SK-N-SH (cell line): ENCODE measurements at regions of chr11 and their contacts with region 1.

Region 1: GRCh38 chr11:90288212-90288821 is 65.5 kb upstream of the CHORDC1 start:
- DNase-seq: peak; percentile 47
- H3K4me3 ChIP-seq: peak overlapping the region in 1 of 2 experiments; percentile 28; a peak in 1 of 4 replicates
- H3K27ac ChIP-seq: no peak overlapping the region
- H3K4me1 ChIP-seq: no peaks in the 10 kb centered on the region
- H3K27me3 ChIP-seq: no peaks in the 10 kb centered on the region
- CTCF ChIP-seq: peak; percentile 73
- EP300 ChIP-seq: no peak
- RAD21 ChIP-seq: peak; percentile 80

Region 2: GRCh38 chr11:90465507-90465906 is 177.2 kb after region 1 on chr11:
- CTCF ChIA-PET with region 1: interaction called, 20 read pairs
- POLR2A ChIA-PET with region 1: no interaction called
- DNase-seq: no peak
- H3K4me3 ChIP-seq: no peak overlapping the region
- H3K27ac ChIP-seq: no peak overlapping the region
- H3K4me1 ChIP-seq: no peaks in the 10 kb centered on the region
- H3K27me3 ChIP-seq: no peaks in the 10 kb centered on the region
- CTCF ChIP-seq: no peak
- EP300 ChIP-seq: no peak
- RAD21 ChIP-seq: no peak

Region 3: GRCh38 chr11:91248199-91248807 is 960.0 kb after region 1 on chr11:
- CTCF ChIA-PET with region 1: interaction called, 11 read pairs
- POLR2A ChIA-PET with region 1: no interaction called
- DNase-seq: no peak
- H3K4me3 ChIP-seq: no peak overlapping the region; a peak in 1 of 4 replicates
- H3K27ac ChIP-seq: no peak overlapping the region
- H3K4me1 ChIP-seq: no peaks in the 10 kb centered on the region
- H3K27me3 ChIP-seq: no peaks in the 10 kb centered on the region
- CTCF ChIP-seq: peak; percentile 92
- EP300 ChIP-seq: no peak
- RAD21 ChIP-seq: peak; percentile 73